ENCODE measurements at regions of chr10 and their contacts with region 1.

Region 1: GRCh38 chr10:14185316-14186045 is 145.2 kb downstream of the FRMD4A start:
- DNase-seq: peak; percentile 70
- H3K4me3 Mint-ChIP-seq: peak overlapping the region; percentile 63
- H3K27ac Mint-ChIP-seq: peak overlapping the region; percentile 92
- H3K4me1 Mint-ChIP-seq: peaks cover 26% of the 10 kb centered on the region
- H3K27me3 Mint-ChIP-seq: peaks cover 47% of the 10 kb centered on the region

Region 2: DNA sequence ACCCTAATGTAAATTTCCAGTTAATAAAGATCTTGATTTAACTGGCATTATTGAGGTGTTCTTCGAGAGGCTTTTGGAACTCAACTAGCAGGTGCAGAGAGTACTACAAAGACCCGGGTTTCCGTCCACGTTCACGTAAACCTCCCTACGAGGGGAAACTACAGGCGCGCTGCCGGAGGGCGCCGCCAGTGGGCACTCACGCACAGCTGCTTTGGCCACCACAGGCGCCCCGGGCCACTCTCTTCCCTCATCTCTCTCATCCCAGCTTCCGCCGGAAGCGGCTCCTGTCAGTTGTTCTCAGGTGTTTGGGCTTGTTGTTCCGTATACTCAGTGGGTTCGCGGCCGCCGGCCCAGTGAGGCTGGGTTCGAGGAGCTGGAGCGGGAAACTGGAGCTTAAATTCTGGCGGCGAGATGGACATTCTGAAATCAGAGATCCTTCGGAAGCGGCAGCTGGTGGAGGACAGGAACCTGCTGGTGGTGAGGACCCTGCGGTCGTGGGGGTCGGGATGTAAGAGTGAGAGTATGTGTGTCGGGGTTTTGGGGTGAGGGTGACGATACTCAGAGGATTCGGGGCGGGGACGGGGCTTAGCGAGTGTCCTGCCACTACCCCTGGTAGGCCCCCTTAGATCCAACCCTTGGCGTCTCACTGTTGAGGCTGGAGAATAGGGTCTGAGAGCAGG is 598.7 kb before region 1 on chr10 and contains the start of gene PRPF18:
- CTCF ChIA-PET with region 1: no interaction called
- POLR2A ChIA-PET with region 1: interaction called, 17 read pairs
- DNase-seq: peak; percentile 95
- H3K4me3 Mint-ChIP-seq: peak within 1 kb of the TSS; percentile 100
- H3K27ac Mint-ChIP-seq: peak within 1 kb of the TSS; percentile 91
- H3K4me1 Mint-ChIP-seq: peaks cover 29% of the 10 kb centered on the region
- H3K27me3 Mint-ChIP-seq: peaks cover 17% of the 10 kb centered on the region
- total RNA-seq, gene PRPF18: 22.5 to 26.0 TPM

Region 3: DNA sequence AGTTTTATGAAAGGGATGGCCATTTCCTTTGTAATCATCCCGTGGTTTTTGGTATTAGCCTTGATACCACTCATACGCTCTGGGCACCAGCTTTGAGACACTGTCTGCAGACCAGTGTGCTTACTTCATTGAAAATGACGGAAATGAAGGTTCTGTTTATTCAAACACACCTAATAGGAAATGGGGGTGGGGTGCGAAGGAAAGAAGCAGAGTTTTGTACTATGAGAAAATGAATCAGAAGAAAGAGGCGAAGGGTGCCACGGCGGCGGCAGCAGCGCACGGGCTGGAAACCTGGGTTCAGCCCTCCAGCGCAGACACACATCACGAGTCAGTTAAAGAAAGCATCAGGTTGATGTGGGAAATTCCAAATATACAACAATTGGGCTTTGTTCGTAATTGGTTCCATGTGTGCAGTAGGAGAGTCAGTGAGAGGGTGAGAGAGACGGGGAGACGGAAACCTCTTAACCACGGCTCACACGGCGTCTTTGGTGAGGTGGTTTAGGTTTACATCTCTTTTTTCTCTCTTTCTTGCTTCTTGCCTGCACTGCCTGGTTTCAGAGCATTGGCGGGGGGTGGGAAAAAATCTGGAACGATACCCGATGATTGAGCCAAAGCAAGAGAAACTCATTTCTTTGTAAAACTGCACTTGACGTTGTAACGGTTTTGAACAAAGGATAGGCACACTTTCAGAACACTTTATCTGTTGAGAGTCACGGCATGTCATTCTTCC is 175.9 kb before region 1 on chr10:
- CTCF ChIA-PET with region 1: no interaction called
- POLR2A ChIA-PET with region 1: interaction called, 19 read pairs
- DNase-seq: peak; percentile 60
- H3K4me3 Mint-ChIP-seq: peak overlapping the region; percentile 80
- H3K27ac Mint-ChIP-seq: peak overlapping the region; percentile 78
- H3K4me1 Mint-ChIP-seq: peaks cover 31% of the 10 kb centered on the region
- H3K27me3 Mint-ChIP-seq: peaks cover 6% of the 10 kb centered on the region

Region 4: DNA sequence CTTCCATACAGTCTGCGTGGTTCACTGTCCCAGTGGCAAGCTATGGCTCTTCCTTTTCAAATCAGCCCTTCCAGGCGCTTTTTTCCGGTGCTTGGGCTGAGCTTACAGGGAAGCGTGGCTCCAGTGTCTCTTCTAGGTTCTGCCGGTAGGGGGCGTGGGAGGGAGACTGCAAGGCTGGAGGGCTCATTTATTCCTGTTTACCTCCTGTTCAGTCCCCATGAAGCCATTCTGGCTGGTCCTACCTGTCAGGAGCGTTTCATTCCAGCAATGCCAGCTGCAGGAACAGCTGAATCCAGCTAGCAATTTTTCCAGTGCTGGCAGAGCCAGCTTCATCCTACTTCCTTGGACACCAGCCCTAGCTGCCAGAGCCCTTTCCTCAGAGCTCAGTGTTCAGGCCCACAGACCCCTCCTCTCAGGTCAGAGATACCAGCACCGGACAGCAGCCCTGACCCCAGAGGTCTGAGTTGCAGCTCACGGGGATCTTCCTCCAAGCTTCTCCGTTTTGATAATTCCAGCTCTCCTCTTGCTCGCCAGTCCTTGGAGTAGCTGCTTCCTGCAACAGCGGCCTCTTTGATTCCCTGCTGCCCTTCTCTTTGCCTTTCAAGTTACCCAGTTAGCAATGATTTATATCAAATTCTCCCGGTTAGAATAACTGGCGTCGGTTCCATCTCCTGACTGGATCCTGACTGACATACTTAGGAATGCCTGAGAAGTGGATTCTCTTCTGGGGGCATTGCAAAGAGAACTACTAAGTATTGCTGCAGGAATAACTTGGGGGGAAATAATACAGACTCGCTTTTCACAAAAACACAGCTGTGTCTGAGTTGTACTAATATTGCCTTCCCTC is 15.4 kb after region 1 on chr10:
- CTCF ChIA-PET with region 1: interaction called, 28 read pairs
- POLR2A ChIA-PET with region 1: interaction called, 35 read pairs
- DNase-seq: no peak
- H3K4me3 Mint-ChIP-seq: no peak overlapping the region
- H3K27ac Mint-ChIP-seq: no peak overlapping the region
- H3K4me1 Mint-ChIP-seq: no peaks in the 10 kb centered on the region
- H3K27me3 Mint-ChIP-seq: peaks cover 19% of the 10 kb centered on the region

Region 5: GRCh38 chr10:14604181-14605142 is 419.0 kb after region 1 on chr10:
- CTCF ChIA-PET with region 1: no interaction called
- POLR2A ChIA-PET with region 1: interaction called, 13 read pairs
- DNase-seq: peak; percentile 77
- H3K4me3 Mint-ChIP-seq: peak overlapping the region; percentile 94
- H3K27ac Mint-ChIP-seq: peak overlapping the region; percentile 89
- H3K4me1 Mint-ChIP-seq: peaks cover 58% of the 10 kb centered on the region
- H3K27me3 Mint-ChIP-seq: no peaks in the 10 kb centered on the region